ENCODE measurements at regions of chr1 and their contacts with region 1.

Region 1: DNA sequence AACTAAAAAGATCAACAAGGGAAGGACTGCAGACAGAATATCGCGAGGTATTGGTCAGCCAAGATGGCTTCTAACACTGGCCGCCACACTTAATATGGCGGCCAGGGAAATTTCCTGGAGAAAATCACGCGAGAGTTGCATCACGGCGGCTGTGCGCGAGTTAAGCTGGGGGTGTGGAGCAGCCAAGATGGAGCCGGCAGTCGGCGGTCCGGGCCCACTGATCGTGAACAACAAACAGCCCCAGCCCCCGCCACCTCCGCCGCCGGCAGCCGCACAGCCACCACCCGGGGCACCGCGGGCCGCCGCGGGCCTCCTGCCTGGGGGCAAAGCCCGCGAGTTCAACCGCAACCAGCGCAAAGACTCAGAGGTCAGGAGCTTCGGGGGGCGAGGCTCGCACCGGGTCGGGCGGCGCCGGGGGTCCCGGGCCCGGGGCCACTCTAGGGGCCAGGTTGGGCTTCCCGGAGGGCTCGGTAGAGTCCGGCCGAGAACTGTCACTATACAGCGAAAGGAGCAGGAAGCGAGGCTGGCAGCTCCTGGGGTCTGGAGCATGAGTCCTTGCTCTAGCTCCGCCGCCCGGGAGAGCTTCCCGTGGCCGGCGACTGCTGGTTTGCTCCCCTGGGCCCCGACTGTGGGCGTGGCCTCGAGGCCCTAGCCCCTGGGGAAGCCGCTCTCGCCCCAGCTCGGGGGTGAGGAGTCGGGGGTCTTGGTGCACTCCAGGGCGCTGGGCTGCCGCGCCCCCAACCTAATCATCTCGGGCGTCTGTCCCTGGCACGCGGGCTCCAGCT is at the start of gene STRIP1:
- DNase-seq: peak; percentile 96
- H3K4me3 Mint-ChIP-seq: peak within 1 kb of the TSS; percentile 91
- H3K27ac Mint-ChIP-seq: peak within 1 kb of the TSS; percentile 79
- H3K4me1 Mint-ChIP-seq: peaks cover 51% of the 10 kb centered on the region
- H3K27me3 Mint-ChIP-seq: no peaks in the 10 kb centered on the region
- total RNA-seq, gene STRIP1: 20.7 to 22.8 TPM

Region 2: GRCh38 chr1:108746372-108747205 is 1288.1 kb before region 1 on chr1 and contains the start of gene STXBP3:
- CTCF ChIA-PET with region 1: no interaction called
- intact Hi-C with region 1: loop called (anchors 5 kb)
- DNase-seq: peak; percentile 100
- H3K4me3 Mint-ChIP-seq: peak within 1 kb of the TSS; percentile 94
- H3K27ac Mint-ChIP-seq: peak within 1 kb of the TSS; percentile 92
- H3K4me1 Mint-ChIP-seq: peaks cover 28% of the 10 kb centered on the region
- H3K27me3 Mint-ChIP-seq: no peaks in the 10 kb centered on the region
- total RNA-seq, gene STXBP3: 29.1 to 30.3 TPM

Region 3: DNA sequence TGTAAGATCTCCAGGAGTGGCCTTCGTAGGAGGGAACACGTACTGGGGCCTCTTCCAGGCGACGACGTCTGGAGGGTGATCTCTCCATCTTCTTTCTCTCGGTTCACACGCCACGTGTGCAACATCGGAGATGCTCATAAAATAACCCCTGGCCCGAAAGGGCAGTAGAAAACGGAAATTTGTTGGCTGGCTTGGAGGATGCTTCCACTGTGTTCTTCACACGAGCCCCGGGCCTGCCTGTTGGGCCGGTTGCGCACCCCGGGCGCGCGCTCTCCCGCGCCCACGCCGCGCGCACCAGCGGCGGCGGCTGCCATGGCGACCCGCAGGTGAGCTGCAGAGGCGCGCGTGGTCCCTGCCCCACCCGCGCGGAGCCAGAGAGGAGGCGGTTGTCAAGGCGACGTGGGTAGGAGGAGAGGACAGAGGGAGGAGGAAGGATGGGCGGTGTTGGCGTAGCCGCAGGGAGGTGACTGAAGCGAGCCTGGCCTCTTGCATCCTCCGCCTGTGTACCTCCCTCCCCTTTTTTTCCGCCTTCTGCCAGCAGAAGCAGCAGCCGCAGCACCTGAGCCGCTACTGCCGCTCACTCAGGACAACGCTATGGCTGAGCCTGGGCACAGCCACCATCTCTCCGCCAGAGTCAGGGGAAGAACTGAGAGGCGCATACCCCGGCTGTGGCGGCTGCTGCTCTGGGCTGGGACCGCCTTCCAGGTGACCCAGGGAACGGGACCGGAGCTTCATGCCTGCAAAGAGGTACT is 920.9 kb before region 1 on chr1 and contains the start of gene ELAPOR1:
- CTCF ChIA-PET with region 1: no interaction called
- intact Hi-C with region 1: no loop called
- DNase-seq: peak; percentile 87
- H3K4me3 Mint-ChIP-seq: peak within 1 kb of the TSS; percentile 80
- H3K27ac Mint-ChIP-seq: peak within 1 kb of the TSS; percentile 32
- H3K4me1 Mint-ChIP-seq: peaks cover 40% of the 10 kb centered on the region
- H3K27me3 Mint-ChIP-seq: peaks cover 4% of the 10 kb centered on the region
- total RNA-seq, gene ELAPOR1: 4.4 to 5.4 TPM

Region 4: DNA sequence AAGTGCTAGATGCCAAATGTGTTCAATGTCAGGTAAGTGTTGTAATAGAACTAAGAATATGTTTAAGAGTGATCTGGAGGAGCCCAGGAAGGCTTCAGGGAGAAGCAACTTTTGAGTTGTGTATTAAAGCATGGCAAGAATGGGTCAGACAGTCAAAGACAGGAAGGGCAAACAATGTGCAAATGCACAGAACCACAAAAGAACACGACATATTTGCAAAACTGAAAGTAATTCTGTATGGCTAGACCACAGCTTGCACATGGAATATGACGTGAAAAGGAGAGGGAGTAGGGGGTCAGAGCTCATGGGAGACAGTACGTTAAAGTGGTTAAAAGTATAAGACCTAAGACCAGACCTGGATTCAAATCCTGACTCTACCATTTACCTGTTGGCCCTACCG is 629.8 kb before region 1 on chr1:
- CTCF ChIA-PET with region 1: no interaction called
- intact Hi-C with region 1: no loop called
- DNase-seq: no peak
- H3K4me3 Mint-ChIP-seq: no peak overlapping the region
- H3K27ac Mint-ChIP-seq: peak overlapping the region; percentile 76
- H3K4me1 Mint-ChIP-seq: peaks cover 21% of the 10 kb centered on the region
- H3K27me3 Mint-ChIP-seq: no peaks in the 10 kb centered on the region

Region 5: DNA sequence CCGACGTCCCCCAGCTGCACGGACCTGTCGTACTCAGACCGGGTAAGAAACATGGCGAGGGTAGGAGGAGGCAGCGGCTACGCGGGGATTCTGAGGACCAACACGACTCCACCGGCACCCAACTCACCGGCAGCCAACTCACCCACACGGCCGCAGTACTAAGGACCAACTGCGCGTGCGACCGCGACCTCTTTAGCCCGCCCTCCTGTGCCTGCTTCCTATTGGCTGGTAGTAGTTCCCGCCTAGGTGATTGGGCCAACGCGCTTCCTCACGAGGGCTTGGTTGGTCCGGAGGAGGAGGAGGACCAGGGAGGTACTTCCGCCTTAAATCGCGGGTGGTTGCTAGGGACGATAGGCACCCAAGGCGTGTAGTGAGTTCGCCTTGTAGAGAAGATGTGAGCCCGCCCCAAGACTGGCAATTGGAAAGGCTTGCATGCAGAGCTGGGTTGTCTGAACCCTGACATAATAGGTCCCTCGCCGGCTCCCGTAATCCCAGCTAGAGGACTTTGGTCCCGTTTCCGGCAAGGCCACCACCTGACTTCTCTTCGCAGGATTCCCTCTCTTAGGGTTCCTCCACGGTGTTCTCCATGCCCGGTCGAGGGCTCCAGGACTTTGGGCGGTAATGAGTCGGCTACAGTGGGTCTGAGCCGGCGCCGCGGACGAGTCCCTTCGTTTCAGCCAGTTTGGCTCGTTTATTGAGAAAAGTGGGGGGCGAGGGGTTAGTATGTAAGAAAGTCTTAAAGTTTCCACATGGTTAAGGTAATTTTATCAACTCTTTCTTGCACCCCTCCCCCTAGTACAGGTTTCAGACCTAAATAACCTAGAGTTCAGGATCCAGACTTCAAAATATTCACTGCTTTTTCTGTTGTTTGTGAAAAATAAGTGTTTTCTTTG is 608.1 kb before region 1 on chr1 and contains the start of gene PSMA5:
- CTCF ChIA-PET with region 1: no interaction called
- intact Hi-C with region 1: loop called (anchors 1 kb)
- DNase-seq: peak; percentile 98
- H3K4me3 Mint-ChIP-seq: peak within 1 kb of the TSS; percentile 94
- H3K27ac Mint-ChIP-seq: peak within 1 kb of the TSS; percentile 97
- H3K4me1 Mint-ChIP-seq: peaks cover 33% of the 10 kb centered on the region
- H3K27me3 Mint-ChIP-seq: no peaks in the 10 kb centered on the region
- total RNA-seq, gene PSMA5: 181 to 202 TPM

Region 6: DNA sequence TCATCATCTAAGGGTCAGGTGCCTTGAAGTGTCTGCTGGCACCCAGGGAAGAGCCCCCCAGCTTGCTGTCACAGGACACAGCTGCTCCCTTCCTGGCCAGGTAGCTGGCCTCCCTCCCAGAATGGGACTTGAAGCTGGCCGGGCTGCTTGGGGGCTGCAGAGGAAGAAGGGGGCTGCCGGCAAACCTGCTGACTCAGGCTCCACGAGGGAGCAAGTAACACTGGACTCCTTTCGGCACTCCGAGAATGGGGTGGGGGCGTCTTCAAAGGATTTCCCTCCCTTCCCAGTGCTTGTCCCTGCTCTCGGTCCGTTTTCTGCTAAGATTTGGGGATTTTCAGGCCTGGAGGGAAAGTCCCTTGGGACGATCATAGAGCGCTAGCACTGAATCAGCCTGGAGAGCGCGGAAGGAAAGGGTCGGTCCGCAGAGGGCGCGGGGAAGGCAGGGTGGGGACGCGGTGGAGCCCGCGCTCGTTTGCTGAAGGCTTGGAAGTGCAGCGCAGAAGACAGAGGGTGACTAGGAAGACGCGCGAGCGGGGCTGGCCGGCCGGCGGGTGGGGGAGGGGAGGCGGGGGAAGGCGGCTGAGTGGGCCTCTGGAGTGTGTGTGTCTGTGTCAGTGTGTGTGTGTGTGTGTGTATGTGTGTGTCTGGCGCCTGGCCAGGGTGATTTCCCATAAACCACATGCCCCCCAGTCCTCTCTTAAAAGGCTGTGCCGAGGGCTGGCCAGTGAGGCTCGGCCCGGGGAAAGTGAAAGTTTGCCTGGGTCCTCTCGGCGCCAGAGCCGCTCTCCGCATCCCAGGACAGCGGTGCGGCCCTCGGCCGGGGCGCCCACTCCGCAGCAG is 124.3 kb before region 1 on chr1 and contains the start of gene CSF1:
- CTCF ChIA-PET with region 1: no interaction called
- intact Hi-C with region 1: no loop called
- DNase-seq: peak; percentile 69
- H3K4me3 Mint-ChIP-seq: peak within 1 kb of the TSS; percentile 82
- H3K27ac Mint-ChIP-seq: peak within 1 kb of the TSS; percentile 81
- H3K4me1 Mint-ChIP-seq: peaks cover 53% of the 10 kb centered on the region
- H3K27me3 Mint-ChIP-seq: no peaks in the 10 kb centered on the region
- total RNA-seq, gene CSF1: 12.0 to 13.5 TPM

Region 7: GRCh38 chr1:110019770-110020169 is 14.9 kb before region 1 on chr1:
- CTCF ChIA-PET with region 1: interaction called, 20 read pairs
- intact Hi-C with region 1: no loop called
- DNase-seq: no peak
- H3K4me3 Mint-ChIP-seq: no peak overlapping the region
- H3K27ac Mint-ChIP-seq: no peak overlapping the region
- H3K4me1 Mint-ChIP-seq: no peaks in the 10 kb centered on the region
- H3K27me3 Mint-ChIP-seq: no peaks in the 10 kb centered on the region

Region 8: GRCh38 chr1:110060034-110060661 is 25.5 kb after region 1 on chr1:
- CTCF ChIA-PET with region 1: interaction called, 10 read pairs
- intact Hi-C with region 1: loop called (anchors 1 kb)
- DNase-seq: peak; percentile 85
- H3K4me3 Mint-ChIP-seq: no peak overlapping the region
- H3K27ac Mint-ChIP-seq: no peak overlapping the region
- H3K4me1 Mint-ChIP-seq: no peaks in the 10 kb centered on the region
- H3K27me3 Mint-ChIP-seq: no peaks in the 10 kb centered on the region

Region 9: DNA sequence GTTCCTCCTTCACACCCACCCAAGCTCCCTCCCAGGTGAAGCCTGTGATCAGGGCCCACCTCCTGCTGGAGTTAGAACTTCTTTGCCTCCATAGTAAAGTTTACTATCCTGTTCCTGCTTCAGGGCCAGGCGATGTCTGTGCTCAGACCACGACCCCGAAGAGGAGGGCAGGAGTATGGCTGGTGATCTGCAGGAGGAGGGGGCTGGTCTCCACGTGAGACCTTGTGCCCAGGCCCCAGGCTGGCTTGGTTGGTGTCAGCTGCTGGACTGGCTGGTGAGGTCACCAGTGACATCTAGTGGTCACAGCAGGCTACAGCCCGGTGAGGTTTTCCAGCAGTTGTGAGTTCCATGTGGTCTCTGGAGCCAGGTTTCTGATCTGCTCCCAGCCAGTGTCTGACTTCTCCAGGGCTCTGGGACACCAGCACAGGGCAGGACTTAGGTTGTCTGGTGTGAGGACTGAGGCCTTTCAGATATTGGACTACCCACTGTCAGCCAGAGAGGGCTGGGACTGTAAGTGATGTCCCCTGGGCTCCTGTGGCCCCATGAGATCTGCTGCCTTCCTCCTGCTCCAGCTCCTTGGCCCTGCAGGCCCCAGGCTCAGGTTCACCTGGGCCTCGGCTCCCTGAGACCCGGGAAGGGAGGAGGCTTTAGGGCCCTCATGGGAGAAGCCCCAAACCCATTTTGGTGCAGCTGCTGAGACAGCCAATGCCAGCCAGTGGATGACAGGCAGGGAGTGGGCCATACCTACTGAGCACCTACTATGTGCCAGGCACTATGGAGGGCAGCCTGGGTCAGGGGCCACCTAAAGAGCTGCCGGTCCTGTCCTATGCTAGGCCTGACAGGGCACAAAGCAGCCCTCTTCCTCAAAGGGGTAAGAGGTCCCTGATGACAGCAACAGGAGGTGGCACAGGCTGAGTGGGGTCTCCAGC is 71.6 kb after region 1 on chr1:
- CTCF ChIA-PET with region 1: interaction called, 35 read pairs
- intact Hi-C with region 1: loop called (anchors 1 kb)
- DNase-seq: peak; percentile 78
- H3K4me3 Mint-ChIP-seq: no peak overlapping the region
- H3K27ac Mint-ChIP-seq: no peak overlapping the region
- H3K4me1 Mint-ChIP-seq: no peaks in the 10 kb centered on the region
- H3K27me3 Mint-ChIP-seq: peaks cover 2% of the 10 kb centered on the region

Region 10: GRCh38 chr1:110407260-110408210 is 372.9 kb after region 1 on chr1 and contains the start of gene LAMTOR5:
- CTCF ChIA-PET with region 1: no interaction called
- intact Hi-C with region 1: loop called (anchors 1 kb)
- DNase-seq: peak; percentile 96
- H3K4me3 Mint-ChIP-seq: peak within 1 kb of the TSS; percentile 99
- H3K27ac Mint-ChIP-seq: peak within 1 kb of the TSS; percentile 96
- H3K4me1 Mint-ChIP-seq: peaks cover 15% of the 10 kb centered on the region
- H3K27me3 Mint-ChIP-seq: no peaks in the 10 kb centered on the region
- total RNA-seq, gene LAMTOR5: 138 to 144 TPM